Activated CD4-positive, alpha-beta T cell treated with anti-CD3 and anti-CD28 coated beads for 36 hours (primary cell): ENCODE measurements at regions of chr14 and their contacts with region 1.

Region 1: GRCh38 chr14:88189417-88190191 is 133.5 kb downstream of the KCNK10 start:
- DNase-seq: peak; percentile 78
- ATAC-seq: peak; percentile 64
- H3K4me3 Mint-ChIP-seq: no peak overlapping the region
- H3K27ac Mint-ChIP-seq: no peak overlapping the region
- H3K4me1 Mint-ChIP-seq: peaks cover 5% of the 10 kb centered on the region
- H3K27me3 Mint-ChIP-seq: peaks cover 10% of the 10 kb centered on the region

Region 2: GRCh38 chr14:88233915-88234314 is 44.3 kb after region 1 on chr14:
- CTCF ChIA-PET with region 1: interaction called, 14 read pairs
- POLR2A ChIA-PET with region 1: no interaction called
- intact Hi-C with region 1: loop called (anchors 1 kb)
- DNase-seq: peak; percentile 28
- ATAC-seq: peak; percentile 26
- H3K4me3 Mint-ChIP-seq: no peak overlapping the region
- H3K27ac Mint-ChIP-seq: no peak overlapping the region
- H3K4me1 Mint-ChIP-seq: no peaks in the 10 kb centered on the region
- H3K27me3 Mint-ChIP-seq: peaks cover 11% of the 10 kb centered on the region

Region 3: GRCh38 chr14:88385345-88386101 is 195.9 kb after region 1 on chr14 and contains the start of gene SPATA7:
- CTCF ChIA-PET with region 1: interaction called, 7 read pairs
- POLR2A ChIA-PET with region 1: no interaction called
- intact Hi-C with region 1: loop called in 1 of 2 experiments (anchors 2 kb)
- DNase-seq: peak; percentile 93
- ATAC-seq: peak; percentile 99
- H3K4me3 Mint-ChIP-seq: peak within 1 kb of the TSS; percentile 96
- H3K27ac Mint-ChIP-seq: peak within 1 kb of the TSS; percentile 88
- H3K4me1 Mint-ChIP-seq: peaks cover 17% of the 10 kb centered on the region
- H3K27me3 Mint-ChIP-seq: no peaks in the 10 kb centered on the region
- total RNA-seq, gene SPATA7: 3.4 to 4.0 TPM

Region 4: DNA sequence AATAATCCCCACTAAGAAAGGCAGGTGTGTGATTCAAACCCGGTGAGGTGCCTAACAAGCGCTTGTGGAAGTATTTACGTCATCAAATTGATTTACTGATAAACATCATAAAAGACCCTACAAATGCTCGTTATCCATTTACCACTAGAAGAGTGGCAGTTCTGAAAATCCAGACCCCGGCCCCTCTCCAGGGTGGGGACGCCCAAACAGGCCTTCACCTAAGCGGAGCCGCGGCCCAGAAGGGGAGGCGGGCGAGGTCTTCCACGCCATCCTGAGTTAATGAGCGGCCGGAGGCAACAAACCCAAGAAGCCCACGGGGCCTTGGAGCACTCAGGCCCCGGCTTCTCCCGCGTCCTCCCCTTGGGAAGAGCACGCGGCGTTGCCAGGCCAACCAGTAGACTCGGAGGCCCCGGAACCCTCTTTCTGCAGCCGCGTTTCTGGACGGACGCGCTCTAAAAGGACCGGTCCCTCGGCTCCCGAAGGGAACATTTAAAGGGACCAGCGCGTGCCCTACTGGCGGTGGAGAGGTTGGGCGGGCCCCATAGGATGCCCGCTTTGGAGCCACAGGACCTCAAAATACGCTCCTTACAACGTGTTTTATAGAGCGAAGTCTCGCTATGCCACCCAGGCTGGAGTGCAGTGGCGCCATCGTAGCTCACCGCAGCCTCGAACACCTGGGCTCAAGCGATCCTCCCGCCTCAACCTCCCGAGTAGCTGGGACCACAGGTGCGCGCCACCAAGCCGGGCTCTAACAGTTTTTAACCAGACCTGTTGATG is 361.7 kb after region 1 on chr14:
- CTCF ChIA-PET with region 1: no interaction called
- POLR2A ChIA-PET with region 1: no interaction called
- intact Hi-C with region 1: loop called in 1 of 2 experiments (anchors 10 kb)
- DNase-seq: peak; percentile 71
- ATAC-seq: peak; percentile 70
- H3K4me3 Mint-ChIP-seq: peak overlapping the region; percentile 63
- H3K27ac Mint-ChIP-seq: no peak overlapping the region
- H3K4me1 Mint-ChIP-seq: peaks cover 13% of the 10 kb centered on the region
- H3K27me3 Mint-ChIP-seq: peaks cover 37% of the 10 kb centered on the region